IMR-90 (cell line): ENCODE measurements at regions of chr9 and their contacts with region 1.

Region 1: GRCh38 chr9:120619751-120620655 is 40.0 kb upstream of the CDK5RAP2 start:
- DNase-seq: peak; percentile 74
- ATAC-seq: peak; percentile 79
- H3K4me3 ChIP-seq: no peak overlapping the region
- H3K27ac ChIP-seq: no peak overlapping the region; the same call in 1 of the 2 replicates
- H3K4me1 ChIP-seq: peaks cover 11% of the 10 kb centered on the region
- H3K27me3 ChIP-seq: no peaks in the 10 kb centered on the region
- CTCF ChIP-seq: peak; percentile 83
- POLR2A ChIP-seq: no peak
- RAD21 ChIP-seq: peak; percentile 85

Region 2: DNA sequence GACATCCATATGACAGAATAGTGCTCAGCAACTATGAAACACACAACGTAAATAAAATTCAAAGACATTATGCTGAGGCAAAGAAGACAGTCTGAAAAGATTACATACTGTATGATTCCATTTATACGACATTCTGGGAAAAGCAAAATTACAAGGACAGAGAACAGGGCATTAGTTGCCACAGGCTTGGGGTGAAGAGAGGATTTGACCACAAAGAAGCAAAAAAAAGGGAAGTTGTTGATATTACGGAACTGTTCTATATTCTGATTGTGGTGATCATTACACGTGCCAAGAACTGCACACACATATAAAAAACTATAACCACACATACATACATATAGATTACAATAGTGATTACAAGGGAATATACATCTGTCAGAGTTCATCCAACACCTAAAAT is 64.2 kb before region 1 on chr9:
- CTCF ChIA-PET with region 1: no interaction called
- POLR2A ChIA-PET with region 1: no interaction called
- dilution Hi-C with region 1: no loop called
- in situ Hi-C with region 1: no loop called
- intact Hi-C with region 1: no loop called
- DNase-seq: no peak
- ATAC-seq: no peak
- H3K4me3 ChIP-seq: no peak overlapping the region
- H3K27ac ChIP-seq: no peak overlapping the region
- H3K4me1 ChIP-seq: no peaks in the 10 kb centered on the region
- H3K27me3 ChIP-seq: no peaks in the 10 kb centered on the region
- CTCF ChIP-seq: no peak
- POLR2A ChIP-seq: no peak
- RAD21 ChIP-seq: no peak

Region 3: GRCh38 chr9:120580591-120580896 is 39.5 kb before region 1 on chr9:
- CTCF ChIA-PET with region 1: no interaction called
- POLR2A ChIA-PET with region 1: interaction called, 10 read pairs
- dilution Hi-C with region 1: no loop called
- in situ Hi-C with region 1: no loop called
- intact Hi-C with region 1: no loop called
- DNase-seq: no peak
- ATAC-seq: no peak
- H3K4me3 ChIP-seq: peak overlapping the region; percentile 15; the same call in 1 of the 2 replicates
- H3K27ac ChIP-seq: peak overlapping the region; percentile 2; the same call in 1 of the 2 replicates
- H3K4me1 ChIP-seq: peaks cover 6% of the 10 kb centered on the region
- H3K27me3 ChIP-seq: no peaks in the 10 kb centered on the region
- CTCF ChIP-seq: no peak
- POLR2A ChIP-seq: no peak
- RAD21 ChIP-seq: no peak

Region 4: DNA sequence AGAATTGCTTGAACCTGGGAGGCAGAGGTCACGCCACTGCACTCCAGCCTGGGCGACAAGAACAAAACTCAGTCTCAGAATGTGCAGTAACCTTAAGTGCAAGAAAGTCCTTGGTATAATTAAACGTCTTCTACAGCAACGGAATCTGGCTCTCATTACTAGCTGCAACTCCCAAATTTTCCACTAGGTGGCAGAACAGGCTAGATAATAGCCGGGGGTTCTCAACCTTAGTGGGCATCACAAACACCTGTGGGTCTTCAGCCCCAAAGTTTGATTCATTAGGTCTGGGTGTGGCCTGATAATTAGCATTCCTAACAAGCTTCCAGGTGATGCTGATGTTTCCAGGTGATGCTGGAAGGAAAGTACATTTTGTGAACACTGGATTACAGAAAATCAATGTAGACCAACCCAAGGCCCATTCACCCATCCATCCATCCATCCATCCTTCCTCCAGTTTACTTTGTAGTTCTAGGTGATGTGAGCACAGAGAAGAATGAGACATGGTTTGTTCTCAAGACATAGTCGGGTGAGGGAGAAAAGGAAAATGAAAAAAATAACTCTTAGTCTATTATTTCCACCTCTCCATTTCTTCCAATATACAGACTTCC is 135.9 kb after region 1 on chr9:
- CTCF ChIA-PET with region 1: interaction called, 4 read pairs
- POLR2A ChIA-PET with region 1: no interaction called
- dilution Hi-C with region 1: no loop called
- in situ Hi-C with region 1: no loop called
- intact Hi-C with region 1: loop called (anchors 1 kb)
- DNase-seq: peak; percentile 34
- ATAC-seq: peak; percentile 81
- H3K4me3 ChIP-seq: no peak overlapping the region
- H3K27ac ChIP-seq: no peak overlapping the region
- H3K4me1 ChIP-seq: peaks cover 7% of the 10 kb centered on the region
- H3K27me3 ChIP-seq: no peaks in the 10 kb centered on the region
- CTCF ChIP-seq: peak; percentile 80
- POLR2A ChIP-seq: no peak
- RAD21 ChIP-seq: peak; percentile 90

Region 5: DNA sequence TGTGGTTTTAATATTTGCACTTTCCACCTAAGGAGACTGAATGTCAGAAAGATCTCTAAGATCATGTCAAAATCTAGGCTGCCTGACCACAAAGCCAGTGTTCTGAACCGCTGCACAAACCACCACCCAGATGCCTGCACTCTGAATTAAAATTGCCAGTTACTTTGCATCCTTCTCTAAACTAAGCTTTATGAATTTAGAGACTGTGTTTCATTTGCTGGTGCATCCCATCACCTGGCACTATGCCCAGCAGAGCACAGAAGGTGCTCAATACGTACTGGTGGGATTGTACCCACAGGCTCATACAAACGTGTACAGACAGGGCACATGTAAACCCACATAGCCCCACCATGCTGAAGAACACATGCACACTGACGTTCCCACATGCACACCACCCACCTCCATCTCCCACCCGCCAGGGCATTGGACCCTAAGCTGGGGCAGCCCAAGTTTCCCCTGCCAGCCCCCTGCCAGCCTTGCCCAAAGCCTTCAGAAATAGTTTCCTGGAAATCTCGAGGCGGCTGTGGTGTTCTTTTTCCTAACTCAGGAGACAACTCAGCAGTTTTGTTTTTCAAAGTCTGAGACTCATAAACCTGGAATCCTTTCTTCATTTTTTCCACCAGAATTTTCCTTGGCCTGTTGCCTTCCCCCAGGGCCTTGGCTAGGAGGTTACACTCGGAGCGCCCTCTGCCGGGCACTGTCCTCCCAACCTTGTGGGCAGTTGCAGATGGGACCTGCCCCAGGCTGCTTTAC is 316.2 kb after region 1 on chr9:
- CTCF ChIA-PET with region 1: no interaction called
- POLR2A ChIA-PET with region 1: no interaction called
- dilution Hi-C with region 1: no loop called
- in situ Hi-C with region 1: no loop called
- intact Hi-C with region 1: loop called (anchors 5 kb)
- DNase-seq: peak; percentile 95
- ATAC-seq: peak; percentile 61
- H3K4me3 ChIP-seq: peak overlapping the region; percentile 20
- H3K27ac ChIP-seq: peak overlapping the region; percentile 99
- H3K4me1 ChIP-seq: peaks cover 39% of the 10 kb centered on the region
- H3K27me3 ChIP-seq: no peaks in the 10 kb centered on the region
- CTCF ChIP-seq: peak; percentile 94
- POLR2A ChIP-seq: 0 out of 2 replicates have a peak, but pooled peaks have one; percentile 29
- RAD21 ChIP-seq: peak; percentile 91

Region 6: DNA sequence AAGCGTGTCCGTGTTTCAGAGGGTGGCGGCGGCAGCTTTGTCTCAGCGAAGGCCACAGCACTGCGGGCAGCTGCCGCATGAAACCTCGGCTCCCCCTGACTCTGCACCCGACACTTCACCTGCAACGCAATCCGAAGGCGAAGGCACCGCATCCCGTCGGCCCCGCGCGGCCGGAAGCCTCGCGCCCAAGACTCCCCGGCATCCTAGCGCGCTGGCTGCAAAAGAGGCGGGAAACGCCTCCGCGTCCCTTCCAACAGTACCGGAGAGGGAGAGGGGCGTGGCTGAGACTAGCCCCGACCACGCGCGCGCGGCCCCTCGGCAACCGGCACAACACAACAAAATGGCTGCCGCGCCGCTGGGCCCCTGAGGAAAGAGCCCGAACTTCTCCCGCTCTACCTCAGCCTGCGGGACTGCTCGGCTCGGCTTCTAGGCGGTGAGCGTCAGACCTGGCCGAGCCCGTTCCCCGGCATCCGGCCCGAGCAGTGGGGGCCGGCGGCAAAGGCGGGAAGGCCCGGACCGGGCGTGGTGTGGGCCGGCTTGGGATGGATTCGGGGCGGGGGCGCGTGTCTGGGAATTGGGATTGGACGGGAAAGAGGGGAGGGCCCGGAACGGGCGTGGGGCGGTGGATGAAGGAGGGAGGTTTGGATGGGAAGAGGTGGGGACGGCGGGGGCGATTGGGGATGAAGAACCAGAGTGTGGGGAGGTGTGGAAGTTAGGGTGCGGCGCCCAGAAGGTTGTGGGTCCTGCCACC is 454.8 kb after region 1 on chr9 and contains the start of gene CNTRL:
- CTCF ChIA-PET with region 1: interaction called, 3 read pairs
- POLR2A ChIA-PET with region 1: no interaction called
- dilution Hi-C with region 1: no loop called
- in situ Hi-C with region 1: loop called (anchors 25 kb)
- intact Hi-C with region 1: no loop called
- DNase-seq: peak; percentile 85
- ATAC-seq: peak; percentile 91
- H3K4me3 ChIP-seq: peak within 1 kb of the TSS; percentile 73
- H3K27ac ChIP-seq: peak within 1 kb of the TSS; percentile 85
- H3K4me1 ChIP-seq: peaks cover 1% of the 10 kb centered on the region; the same call in 1 of the 2 replicates
- H3K27me3 ChIP-seq: no peaks in the 10 kb centered on the region
- CTCF ChIP-seq: no peak
- POLR2A ChIP-seq: peak; percentile 57; the same call in 1 of the 2 replicates
- RAD21 ChIP-seq: no peak
- total RNA-seq, gene CNTRL: 7.3 and 10.6 TPM in 2 replicates